ENCODE measurements at regions of chr10 and their contacts with region 1.

Region 1: GRCh38 chr10:73772280-73773151 is 9.3 kb upstream of the CHCHD1 start:
- DNase-seq: peak; percentile 84
- H3K4me3 Mint-ChIP-seq: peak overlapping the region; percentile 96
- H3K27ac Mint-ChIP-seq: peak overlapping the region; percentile 90
- H3K4me1 Mint-ChIP-seq: peaks cover 52% of the 10 kb centered on the region
- H3K27me3 Mint-ChIP-seq: no peaks in the 10 kb centered on the region

Region 2: GRCh38 chr10:73743905-73744663 is 28.4 kb before region 1 on chr10 and contains the start of gene SEC24C:
- intact Hi-C with region 1: loop called (anchors 1 kb)
- DNase-seq: peak; percentile 93
- H3K4me3 Mint-ChIP-seq: peak within 1 kb of the TSS; percentile 97
- H3K27ac Mint-ChIP-seq: peak within 1 kb of the TSS; percentile 100
- H3K4me1 Mint-ChIP-seq: peaks cover 27% of the 10 kb centered on the region
- H3K27me3 Mint-ChIP-seq: no peaks in the 10 kb centered on the region
- total RNA-seq, gene SEC24C: 119 TPM in 2 replicates

Region 3: GRCh38 chr10:73810735-73811465 is 38.4 kb after region 1 on chr10:
- intact Hi-C with region 1: loop called (anchors 5 kb)
- DNase-seq: peak; percentile 63
- H3K4me3 Mint-ChIP-seq: peak overlapping the region; percentile 90
- H3K27ac Mint-ChIP-seq: peak overlapping the region; percentile 94
- H3K4me1 Mint-ChIP-seq: peaks cover 28% of the 10 kb centered on the region
- H3K27me3 Mint-ChIP-seq: no peaks in the 10 kb centered on the region

Region 4: DNA sequence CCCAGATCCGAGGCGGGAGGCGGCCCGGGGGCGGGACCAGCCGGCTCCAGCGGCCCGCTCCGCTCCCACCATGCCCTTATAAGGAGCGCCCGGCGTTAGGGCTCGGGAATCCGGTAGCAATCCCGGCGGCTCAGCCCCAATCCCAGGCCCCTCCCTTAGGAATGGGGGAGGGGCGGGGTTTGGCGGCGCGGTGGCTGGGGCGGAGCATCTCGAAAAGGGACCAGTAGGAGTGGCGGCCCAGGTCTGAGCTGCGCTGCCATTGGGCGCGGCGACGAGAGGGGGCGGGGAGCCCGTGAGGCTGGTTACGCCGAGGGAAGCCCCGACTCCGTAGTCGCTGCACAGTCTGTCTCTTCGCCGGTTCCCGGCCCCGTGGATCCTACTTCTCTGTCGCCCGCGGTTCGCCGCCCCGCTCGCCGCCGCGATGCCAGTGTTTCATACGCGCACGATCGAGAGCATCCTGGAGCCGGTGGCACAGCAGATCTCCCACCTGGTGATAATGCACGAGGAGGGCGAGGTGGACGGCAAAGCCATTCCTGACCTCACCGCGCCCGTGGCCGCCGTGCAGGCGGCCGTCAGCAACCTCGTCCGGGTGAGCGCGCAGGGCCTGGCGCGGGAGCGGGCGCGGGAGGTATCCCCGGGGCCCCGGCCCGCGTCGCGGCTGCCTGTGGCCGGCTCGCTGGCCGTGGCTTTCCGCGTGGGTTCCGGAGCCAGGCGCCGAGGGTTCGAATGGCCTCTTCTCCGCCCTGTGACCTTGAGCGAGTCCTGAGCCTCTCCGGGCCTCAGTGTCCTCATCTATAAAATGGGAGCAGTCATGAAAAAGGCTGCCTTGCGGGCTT is 225.5 kb after region 1 on chr10 and contains the start of gene VCL:
- intact Hi-C with region 1: loop called (anchors 5 kb)
- DNase-seq: peak; percentile 94
- H3K4me3 Mint-ChIP-seq: peak within 1 kb of the TSS; percentile 96
- H3K27ac Mint-ChIP-seq: peak within 1 kb of the TSS; percentile 96
- H3K4me1 Mint-ChIP-seq: peaks cover 43% of the 10 kb centered on the region
- H3K27me3 Mint-ChIP-seq: no peaks in the 10 kb centered on the region
- total RNA-seq, gene VCL: 24.4 TPM in 2 replicates